CD14-positive monocyte (primary cell): ENCODE measurements at regions of chr19 and their contacts with region 1.

Region 1: GRCh38 chr19:41821003-41821735 is 23.3 kb downstream of the LYPD4 start:
- DNase-seq: peak; percentile 60 to 75 (median 74)
- H3K4me3 ChIP-seq: no peak overlapping the region
- H3K4me3 Mint-ChIP-seq: peak overlapping the region in 1 of 2 donors; percentile 62
- H3K27ac ChIP-seq: no peak overlapping the region
- H3K27ac Mint-ChIP-seq: no peak overlapping the region
- H3K4me1 ChIP-seq: peaks cover 5 to 7% of the 10 kb centered on the region in 2 donors
- H3K4me1 Mint-ChIP-seq: peaks cover 11% of the 10 kb centered on the region
- H3K27me3 ChIP-seq: peaks cover 0 to 3% of the 10 kb centered on the region in 2 donors
- H3K27me3 Mint-ChIP-seq: peaks cover 10 to 31% (median 24%) of the 10 kb centered on the region in 3 donors
- CTCF ChIP-seq: peak; percentile 84

Region 2: DNA sequence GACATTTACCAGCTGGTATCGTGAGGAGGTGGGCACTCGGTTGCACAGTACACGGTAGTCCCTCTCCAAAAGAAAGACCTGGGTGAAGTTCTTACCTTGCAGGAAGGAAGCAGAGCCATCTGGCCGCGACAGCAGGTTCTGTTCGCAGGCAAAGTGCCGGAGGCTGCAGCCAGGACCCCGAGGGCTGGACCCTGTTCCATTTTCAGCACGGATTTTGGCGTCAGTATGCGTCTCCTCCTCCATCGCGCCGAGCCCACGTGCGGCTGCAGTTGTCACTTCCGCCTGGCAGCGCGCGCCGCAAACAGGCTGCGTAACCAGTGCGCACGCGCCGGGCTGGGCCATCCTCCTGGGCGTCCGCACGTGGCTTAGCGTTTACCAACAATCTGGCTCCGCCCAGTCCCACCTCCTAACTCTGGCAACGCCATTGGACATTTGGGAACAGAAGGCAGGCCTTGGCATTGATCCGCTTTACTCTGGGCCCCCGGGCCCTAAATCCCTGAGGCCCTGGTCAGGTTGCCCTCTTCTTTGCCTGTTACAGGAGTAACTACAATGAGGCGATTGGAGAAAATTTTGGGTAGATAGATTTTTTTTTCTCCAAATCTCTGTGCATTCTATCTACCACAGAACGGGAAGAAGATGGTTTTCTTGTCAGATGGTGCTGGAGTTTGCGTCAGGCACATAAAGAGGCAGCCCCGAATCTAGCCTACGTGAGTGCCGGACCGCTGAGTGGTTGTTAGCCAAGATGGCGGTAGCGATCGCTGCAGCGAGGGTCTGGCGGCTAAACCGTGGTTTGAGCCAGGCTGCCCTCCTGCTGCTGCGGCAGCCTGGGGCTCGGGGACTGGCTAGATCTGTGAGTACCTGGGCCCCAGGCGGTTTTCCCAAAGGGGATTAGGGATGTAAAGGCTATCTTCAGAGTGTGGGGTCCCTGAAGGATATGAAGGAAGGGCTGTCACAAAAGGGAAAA is 423.8 kb before region 1 on chr19 and contains the starts of genes BCKDHA and EXOSC5:
- intact Hi-C with region 1: no loop called
- DNase-seq: peak; percentile 100
- H3K4me3 ChIP-seq: peak within 1 kb of the TSS; percentile 87 to 95 (median 95)
- H3K4me3 Mint-ChIP-seq: peak within 1 kb of the TSS; percentile 97
- H3K27ac ChIP-seq: peak within 1 kb of the TSS; percentile 80 to 97
- H3K27ac Mint-ChIP-seq: peak within 1 kb of the TSS; percentile 98 to 100 (median 99)
- H3K4me1 ChIP-seq: peaks cover 29 to 30% of the 10 kb centered on the region in 2 donors
- H3K4me1 Mint-ChIP-seq: peaks cover 42% of the 10 kb centered on the region
- H3K27me3 ChIP-seq: no peaks in the 10 kb centered on the region
- H3K27me3 Mint-ChIP-seq: no peaks in the 10 kb centered on the region
- CTCF ChIP-seq: no peak
- polyA plus RNA-seq, gene BCKDHA: 52.4 to 90.1 (median 87.6) TPM
- polyA plus RNA-seq, gene EXOSC5: 24.0 to 58.7 (median 40.5) TPM

Region 3: DNA sequence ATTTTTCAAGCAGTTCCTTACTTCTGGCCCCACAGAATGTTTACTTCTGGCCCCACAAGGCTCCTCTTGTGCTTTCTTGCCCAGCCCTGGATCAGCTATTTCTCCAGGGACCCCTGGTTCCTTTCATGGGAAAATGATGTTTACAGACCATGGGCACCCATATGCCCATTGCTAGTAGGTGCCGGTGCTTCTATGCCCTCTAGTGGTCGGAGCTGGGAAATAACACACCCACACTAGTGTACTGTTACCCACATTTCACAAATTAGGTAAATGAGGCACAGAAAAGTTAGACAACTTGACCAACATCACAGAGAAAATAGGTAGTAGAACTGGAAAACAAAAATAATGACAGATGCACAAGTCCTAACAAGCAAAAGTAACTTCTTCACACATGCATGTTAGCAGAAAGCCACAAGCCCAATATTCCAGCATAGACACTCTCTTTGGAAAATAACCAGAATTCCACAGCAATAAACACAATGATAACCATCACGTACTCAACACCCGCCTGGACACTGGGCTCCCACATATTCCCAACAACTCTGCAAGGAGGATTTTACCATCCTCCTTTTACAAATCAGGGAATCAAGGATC is 67.1 kb before region 1 on chr19:
- intact Hi-C with region 1: loop called in 1 of 2 experiments (anchors 2 kb)
- DNase-seq: peak; percentile 46 to 63 (median 61)
- H3K4me3 ChIP-seq: no peak overlapping the region
- H3K4me3 Mint-ChIP-seq: no peak overlapping the region
- H3K27ac ChIP-seq: no peak overlapping the region
- H3K27ac Mint-ChIP-seq: no peak overlapping the region
- H3K4me1 ChIP-seq: peaks cover 4 to 6% of the 10 kb centered on the region in 2 donors
- H3K4me1 Mint-ChIP-seq: peaks cover 22% of the 10 kb centered on the region
- H3K27me3 ChIP-seq: no peaks in the 10 kb centered on the region
- H3K27me3 Mint-ChIP-seq: peaks cover 0 to 7% (median 0%) of the 10 kb centered on the region in 3 donors
- CTCF ChIP-seq: peak; percentile 65

Region 4: DNA sequence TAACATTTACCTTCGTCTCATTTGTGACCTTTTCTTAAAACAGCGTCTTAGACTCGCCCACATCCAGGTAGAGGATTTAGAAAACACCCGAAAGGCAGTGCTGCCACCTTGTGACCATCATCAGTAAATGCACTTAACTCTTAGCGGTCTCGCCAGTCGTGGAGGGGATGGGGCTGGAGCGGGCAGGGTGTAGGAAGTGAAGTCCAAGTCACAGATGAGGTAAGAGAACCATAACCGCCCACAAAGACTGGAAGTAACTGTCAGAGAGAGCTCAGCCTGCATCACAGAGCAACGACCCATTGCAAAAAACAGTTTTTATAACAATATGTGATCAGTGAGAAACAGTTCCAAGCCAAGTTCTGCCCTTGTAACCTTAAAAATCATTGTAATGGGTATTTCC is 35.5 kb before region 1 on chr19:
- intact Hi-C with region 1: loop called (anchors 2 to 5 kb)
- DNase-seq: peak; percentile 82 to 91 (median 85)
- H3K4me3 ChIP-seq: peak overlapping the region in 1 of 3 experiments; percentile 45
- H3K4me3 Mint-ChIP-seq: peak overlapping the region; percentile 47 to 79
- H3K27ac ChIP-seq: peak overlapping the region in 1 of 2 donors; percentile 20
- H3K27ac Mint-ChIP-seq: peak overlapping the region; percentile 22 to 81 (median 64)
- H3K4me1 ChIP-seq: peaks cover 34 to 41% of the 10 kb centered on the region in 2 donors
- H3K4me1 Mint-ChIP-seq: peaks cover 38% of the 10 kb centered on the region
- H3K27me3 ChIP-seq: no peaks in the 10 kb centered on the region
- H3K27me3 Mint-ChIP-seq: peaks cover 0 to 11% (median 7%) of the 10 kb centered on the region in 3 donors
- CTCF ChIP-seq: peak; percentile 94

Region 5: DNA sequence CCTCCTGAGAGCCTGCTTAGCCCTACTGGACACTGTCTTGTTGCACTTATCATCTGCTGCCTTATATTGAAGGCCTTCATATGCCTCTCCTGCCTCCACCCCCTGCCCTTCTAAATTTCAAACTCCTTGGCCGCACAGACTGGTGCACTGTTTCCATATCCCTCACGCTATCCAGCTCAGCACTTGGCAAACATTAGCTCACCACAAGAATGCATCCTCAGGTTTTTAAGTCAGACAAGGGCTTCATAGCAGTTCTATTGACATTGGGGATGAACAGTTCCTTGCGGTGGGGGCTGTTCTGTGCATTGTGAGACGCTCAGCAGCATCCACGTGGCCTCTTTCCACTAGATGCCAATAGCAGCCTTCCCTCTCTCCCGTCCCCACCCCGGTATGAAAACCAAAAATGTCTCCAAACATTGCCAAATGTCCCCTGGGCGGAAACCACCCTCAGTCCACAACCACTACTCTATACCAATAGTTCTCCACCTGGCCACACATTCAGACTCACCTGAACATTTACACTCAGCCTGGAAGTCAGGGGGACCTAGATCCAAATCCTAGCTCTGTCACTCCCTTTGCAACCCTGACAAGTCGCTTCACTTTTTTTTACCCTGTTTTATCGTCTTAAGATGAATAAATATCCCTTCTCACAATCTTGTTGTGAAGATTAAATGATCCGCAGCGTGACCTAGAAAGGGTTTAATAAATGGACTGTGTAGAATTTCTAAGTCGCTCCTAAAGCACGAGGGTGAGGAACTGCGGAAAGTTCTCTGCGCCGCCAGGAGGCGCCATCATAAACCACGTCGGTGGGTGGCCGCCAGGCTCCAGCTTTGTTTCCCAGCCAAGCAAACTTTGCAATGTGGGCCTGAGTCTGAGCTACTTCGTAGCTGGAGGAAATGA is 28.4 kb before region 1 on chr19:
- intact Hi-C with region 1: loop called (anchors 1 to 2 kb)
- DNase-seq: peak; percentile 53 to 67 (median 57)
- H3K4me3 ChIP-seq: no peak overlapping the region
- H3K4me3 Mint-ChIP-seq: peak overlapping the region in 1 of 2 donors; percentile 26
- H3K27ac ChIP-seq: no peak overlapping the region
- H3K27ac Mint-ChIP-seq: no peak overlapping the region
- H3K4me1 ChIP-seq: peaks cover 34 to 38% of the 10 kb centered on the region in 2 donors
- H3K4me1 Mint-ChIP-seq: peaks cover 39% of the 10 kb centered on the region
- H3K27me3 ChIP-seq: peaks cover 2% of the 10 kb centered on the region in 2 donors
- H3K27me3 Mint-ChIP-seq: peaks cover 13 to 19% (median 15%) of the 10 kb centered on the region in 3 donors
- CTCF ChIP-seq: peak; percentile 89